ENCODE measurements at regions of chr21 and their contacts with region 1.

Region 1: GRCh38 chr21:32612075-32612998 is at the start of gene CFAP298:
- DNase-seq: peak; percentile 96
- ATAC-seq: peak; percentile 86
- H3K4me3 ChIP-seq: peak within 1 kb of the TSS; percentile 85 to 95 (median 88)
- H3K4me3 Mint-ChIP-seq: peak within 1 kb of the TSS; percentile 98
- H3K27ac ChIP-seq: peak within 1 kb of the TSS; percentile 78 to 92
- H3K27ac Mint-ChIP-seq: peak within 1 kb of the TSS; percentile 97
- H3K4me1 ChIP-seq: peaks cover 3 to 21% of the 10 kb centered on the region in 2 donors
- H3K4me1 Mint-ChIP-seq: peaks cover 7% of the 10 kb centered on the region
- H3K27me3 ChIP-seq: no peaks in the 10 kb centered on the region
- H3K27me3 Mint-ChIP-seq: peaks cover 3% of the 10 kb centered on the region
- CTCF ChIP-seq: no peak
- total RNA-seq, gene CFAP298: 29.2 and 29.4 TPM in 2 replicates

Region 2: DNA sequence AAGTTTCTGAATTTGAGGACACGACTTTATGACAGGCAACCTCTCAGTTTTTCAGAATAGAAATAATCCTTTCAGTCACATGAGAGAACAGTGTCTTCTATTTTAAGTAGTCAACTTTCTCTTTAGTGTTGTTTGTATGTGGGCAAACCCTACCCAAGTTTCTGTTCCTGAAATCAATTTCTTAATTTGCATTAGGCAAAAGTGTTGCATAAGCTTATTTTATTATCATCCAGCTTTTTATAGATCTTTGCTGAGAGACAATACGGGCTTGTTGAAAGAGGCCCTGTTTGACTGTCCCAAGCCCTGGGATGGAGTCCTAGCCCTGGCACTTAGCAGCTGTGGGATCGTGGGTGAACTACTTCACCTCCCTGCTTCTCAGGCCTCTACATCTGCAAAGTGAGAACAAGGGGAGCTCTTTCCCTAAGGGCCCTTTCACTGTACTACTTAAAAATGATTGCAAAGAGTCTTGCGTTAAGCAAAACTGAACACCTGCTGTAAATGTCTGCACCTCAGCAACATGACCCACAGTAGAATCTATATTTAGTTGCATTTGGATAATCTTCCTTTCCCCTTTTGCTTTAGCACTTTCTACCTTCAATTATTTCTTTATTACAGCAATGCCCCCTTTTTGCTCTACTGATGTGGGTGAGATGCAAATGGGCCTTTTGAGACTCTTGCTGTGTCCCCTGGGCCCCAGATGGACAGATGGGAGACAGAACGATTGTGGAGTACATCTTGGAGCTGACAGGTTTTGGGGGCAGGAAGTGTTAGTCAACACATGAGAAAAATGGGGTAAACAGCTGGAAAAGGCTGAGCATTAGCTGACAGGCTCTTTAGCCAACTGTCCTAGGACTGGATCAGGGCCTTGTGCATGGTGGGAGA is 839.4 kb before region 1 on chr21:
- CTCF ChIA-PET with region 1: no interaction called
- POLR2A ChIA-PET with region 1: no interaction called
- intact Hi-C with region 1: loop called (anchors 5 kb)
- DNase-seq: peak; percentile 82
- ATAC-seq: peak; percentile 85
- H3K4me3 ChIP-seq: peak overlapping the region in 3 of 5 experiments; percentile 6 to 34 (median 20)
- H3K4me3 Mint-ChIP-seq: peak overlapping the region; percentile 64
- H3K27ac ChIP-seq: peak overlapping the region; percentile 94 to 96
- H3K27ac Mint-ChIP-seq: peak overlapping the region; percentile 94
- H3K4me1 ChIP-seq: peaks cover 51 to 53% of the 10 kb centered on the region in 2 donors
- H3K4me1 Mint-ChIP-seq: peaks cover 51% of the 10 kb centered on the region
- H3K27me3 ChIP-seq: no peaks in the 10 kb centered on the region
- H3K27me3 Mint-ChIP-seq: no peaks in the 10 kb centered on the region
- CTCF ChIP-seq: no peak

Region 3: DNA sequence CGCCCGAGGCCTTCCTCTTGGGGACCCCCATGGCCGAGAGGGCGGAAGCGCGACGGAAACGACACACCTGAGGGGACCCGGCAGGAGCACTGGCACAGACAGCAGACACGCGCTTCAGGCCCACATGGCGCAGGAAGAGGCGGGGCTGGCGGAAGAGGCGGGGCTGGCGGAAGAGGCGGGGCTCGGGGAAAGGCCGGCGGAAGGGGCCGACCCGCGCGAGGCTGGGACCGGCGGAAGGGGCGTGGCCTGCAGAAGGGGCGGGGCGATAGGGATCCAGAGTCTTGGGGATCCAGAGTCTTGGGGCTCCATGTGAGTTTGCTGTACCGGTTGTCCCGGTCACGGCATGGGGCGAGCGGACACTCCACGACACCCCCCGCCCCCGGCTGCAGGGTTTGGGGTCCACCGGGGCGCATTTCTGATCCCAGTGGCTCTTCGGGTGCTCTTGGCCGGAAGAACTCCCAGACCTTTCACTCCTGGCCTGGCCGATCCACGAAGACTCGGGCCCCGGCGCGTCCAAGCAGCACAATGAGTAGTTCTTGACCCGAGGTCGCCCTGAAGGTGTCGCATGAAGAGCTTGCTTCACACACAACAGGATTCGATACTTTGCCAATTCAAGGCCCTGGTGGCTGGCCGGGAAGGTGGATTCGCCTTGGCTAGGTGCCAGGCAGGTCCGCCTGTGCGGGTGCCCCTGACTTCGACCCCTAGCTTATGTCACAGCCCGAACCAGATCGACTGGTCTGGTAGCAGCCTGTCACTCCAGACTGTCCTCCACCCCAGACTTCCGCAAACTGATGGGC is 219.3 kb before region 1 on chr21 and contains the start of gene URB1:
- CTCF ChIA-PET with region 1: no interaction called
- POLR2A ChIA-PET with region 1: interaction called, 3 read pairs
- intact Hi-C with region 1: loop called (anchors 1 kb)
- DNase-seq: peak; percentile 93
- ATAC-seq: peak; percentile 96
- H3K4me3 ChIP-seq: peak within 1 kb of the TSS; percentile 67 to 99 (median 95)
- H3K4me3 Mint-ChIP-seq: peak within 1 kb of the TSS; percentile 92
- H3K27ac ChIP-seq: peak within 1 kb of the TSS; percentile 74 to 90
- H3K27ac Mint-ChIP-seq: peak within 1 kb of the TSS; percentile 90
- H3K4me1 ChIP-seq: peaks cover 18 to 24% of the 10 kb centered on the region in 2 donors
- H3K4me1 Mint-ChIP-seq: peaks cover 39% of the 10 kb centered on the region
- H3K27me3 ChIP-seq: peaks cover 0 to 11% (median 6%) of the 10 kb centered on the region in 4 experiments
- H3K27me3 Mint-ChIP-seq: peaks cover 11% of the 10 kb centered on the region
- CTCF ChIP-seq: no peak
- total RNA-seq, gene URB1: 14.9 and 15.2 TPM in 2 replicates

Region 4: GRCh38 chr21:32727687-32728455 is 115.5 kb after region 1 on chr21 and contains the start of gene SYNJ1:
- CTCF ChIA-PET with region 1: no interaction called
- POLR2A ChIA-PET with region 1: interaction called, 5 read pairs
- intact Hi-C with region 1: loop called (anchors 1 kb)
- DNase-seq: peak; percentile 95
- ATAC-seq: peak; percentile 92
- H3K4me3 ChIP-seq: peak within 1 kb of the TSS; percentile 77 to 92 (median 88)
- H3K4me3 Mint-ChIP-seq: peak within 1 kb of the TSS; percentile 94
- H3K27ac ChIP-seq: peak within 1 kb of the TSS; percentile 32 to 54
- H3K27ac Mint-ChIP-seq: peak within 1 kb of the TSS; percentile 82
- H3K4me1 ChIP-seq: peaks cover 13 to 18% of the 10 kb centered on the region in 2 donors
- H3K4me1 Mint-ChIP-seq: peaks cover 16% of the 10 kb centered on the region
- H3K27me3 ChIP-seq: peaks cover 0 to 4% (median 0%) of the 10 kb centered on the region in 4 experiments
- H3K27me3 Mint-ChIP-seq: no peaks in the 10 kb centered on the region
- CTCF ChIP-seq: no peak
- total RNA-seq, gene SYNJ1: 9.2 and 9.4 TPM in 2 replicates

Region 5: DNA sequence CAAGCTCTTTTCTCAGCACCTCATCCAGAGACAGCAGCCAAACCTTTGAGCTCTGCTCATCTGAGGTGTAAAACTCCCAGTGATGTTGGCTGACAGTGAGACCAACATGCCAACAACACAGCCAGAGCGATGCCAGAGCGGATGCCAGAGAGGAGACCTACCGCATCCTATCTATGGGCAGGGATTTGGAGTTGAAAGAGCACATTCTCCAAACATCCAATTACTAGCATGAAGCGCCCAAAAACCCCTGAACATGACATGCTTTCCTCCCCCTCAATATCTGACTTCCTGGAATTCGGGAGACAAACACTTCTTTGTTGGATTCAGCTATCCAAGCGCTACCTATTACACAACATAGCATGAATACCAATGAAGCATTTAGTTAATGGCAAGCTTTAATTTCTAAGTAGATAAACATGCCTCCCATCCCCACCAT is 182.3 kb after region 1 on chr21:
- CTCF ChIA-PET with region 1: no interaction called
- POLR2A ChIA-PET with region 1: no interaction called
- intact Hi-C with region 1: no loop called
- DNase-seq: no peak
- ATAC-seq: no peak
- H3K4me3 ChIP-seq: no peak overlapping the region
- H3K4me3 Mint-ChIP-seq: no peak overlapping the region
- H3K27ac ChIP-seq: no peak overlapping the region
- H3K27ac Mint-ChIP-seq: no peak overlapping the region
- H3K4me1 ChIP-seq: no peaks in the 10 kb centered on the region
- H3K4me1 Mint-ChIP-seq: no peaks in the 10 kb centered on the region
- H3K27me3 ChIP-seq: no peaks in the 10 kb centered on the region
- H3K27me3 Mint-ChIP-seq: peaks cover 12% of the 10 kb centered on the region
- CTCF ChIP-seq: no peak

Region 6: GRCh38 chr21:33324291-33325221 is 712.2 kb after region 1 on chr21 and contains the start of gene IFNAR1:
- CTCF ChIA-PET with region 1: no interaction called
- POLR2A ChIA-PET with region 1: no interaction called
- intact Hi-C with region 1: loop called (anchors 10 kb)
- DNase-seq: peak; percentile 99
- ATAC-seq: peak; percentile 81
- H3K4me3 ChIP-seq: peak within 1 kb of the TSS; percentile 83 to 98 (median 97)
- H3K4me3 Mint-ChIP-seq: no peak within 1 kb of the TSS
- H3K27ac ChIP-seq: peak within 1 kb of the TSS; percentile 91 to 97
- H3K27ac Mint-ChIP-seq: no peak within 1 kb of the TSS
- H3K4me1 ChIP-seq: peaks cover 28 to 35% of the 10 kb centered on the region in 2 donors
- H3K4me1 Mint-ChIP-seq: peaks cover 30% of the 10 kb centered on the region
- H3K27me3 ChIP-seq: no peaks in the 10 kb centered on the region
- H3K27me3 Mint-ChIP-seq: no peaks in the 10 kb centered on the region
- CTCF ChIP-seq: no peak
- total RNA-seq, gene IFNAR1: 55.7 and 57.7 TPM in 2 replicates

Region 7: DNA sequence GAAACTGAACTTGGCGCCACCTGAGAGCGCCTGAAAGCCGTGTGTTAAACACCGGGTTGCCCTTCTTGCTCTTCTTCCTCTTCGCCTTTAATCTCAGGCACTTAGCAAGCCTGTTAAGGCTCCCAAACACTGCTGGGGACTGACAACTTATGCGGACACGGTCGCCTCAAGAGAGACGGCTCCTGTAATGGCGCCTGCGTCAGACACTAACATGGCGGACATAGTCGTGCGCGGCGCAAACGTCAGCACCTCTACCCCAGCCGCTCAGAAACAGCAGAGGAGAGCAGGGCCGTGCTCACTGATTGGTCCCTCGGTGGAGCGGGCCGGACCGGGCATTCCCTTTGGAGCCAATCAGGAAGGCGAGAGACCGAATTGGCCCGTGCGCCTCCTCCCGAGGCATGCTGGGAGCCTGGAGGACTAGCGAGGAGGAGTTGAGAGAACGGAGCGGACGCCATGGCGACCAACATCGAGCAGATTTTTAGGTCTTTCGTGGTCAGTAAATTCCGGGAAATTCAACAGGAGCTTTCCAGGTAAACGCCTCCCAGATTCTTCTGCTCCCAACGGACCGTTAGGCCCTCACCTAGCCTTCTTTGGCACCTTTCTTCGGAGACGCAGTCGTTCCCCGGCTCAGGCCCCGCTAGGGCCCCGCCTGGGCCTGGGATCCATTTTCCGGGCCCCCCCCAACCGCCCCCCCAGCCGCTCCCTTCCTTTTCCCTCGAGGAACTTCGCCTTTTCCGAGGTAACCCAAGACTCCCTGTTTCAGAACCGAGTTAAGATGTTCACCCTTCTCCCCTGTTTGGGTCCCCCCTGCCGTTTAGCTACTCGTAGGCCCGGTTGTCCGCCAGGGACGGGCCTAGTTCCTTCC is 930.5 kb after region 1 on chr21 and contains the start of gene SON:
- CTCF ChIA-PET with region 1: no interaction called
- POLR2A ChIA-PET with region 1: no interaction called
- intact Hi-C with region 1: loop called (anchors 5 kb)
- DNase-seq: peak; percentile 98
- ATAC-seq: peak; percentile 88
- H3K4me3 ChIP-seq: peak within 1 kb of the TSS; percentile 69 to 99 (median 89)
- H3K4me3 Mint-ChIP-seq: peak within 1 kb of the TSS; percentile 97
- H3K27ac ChIP-seq: peak within 1 kb of the TSS; percentile 96 to 99
- H3K27ac Mint-ChIP-seq: peak within 1 kb of the TSS; percentile 99
- H3K4me1 ChIP-seq: peaks cover 17 to 31% of the 10 kb centered on the region in 2 donors
- H3K4me1 Mint-ChIP-seq: peaks cover 43% of the 10 kb centered on the region
- H3K27me3 ChIP-seq: no peaks in the 10 kb centered on the region
- H3K27me3 Mint-ChIP-seq: no peaks in the 10 kb centered on the region
- CTCF ChIP-seq: no peak
- total RNA-seq, gene SON: 441 and 463 TPM in 2 replicates

Measured in B cell (primary cell).